ENCODE measurements at regions of chr20 and their contacts with region 1.

Region 1: GRCh38 chr20:62010551-62011402 is 54.9 kb downstream of the TAF4 start:
- DNase-seq: peak; percentile 20
- ATAC-seq: peak; percentile 83
- H3K4me3 ChIP-seq: no peak overlapping the region
- H3K27ac ChIP-seq: no peak overlapping the region
- H3K4me1 ChIP-seq: no peaks in the 10 kb centered on the region; the same call in 1 of the 2 replicates
- H3K27me3 ChIP-seq: no peaks in the 10 kb centered on the region
- CTCF ChIP-seq: no peak; the same call in 1 of the 2 replicates

Region 2: GRCh38 chr20:61925555-61926252 is 85.1 kb before region 1 on chr20:
- CTCF ChIA-PET with region 1: no interaction called
- POLR2A ChIA-PET with region 1: no interaction called
- in situ Hi-C with region 1: no loop called
- intact Hi-C with region 1: no loop called
- DNase-seq: no peak
- ATAC-seq: peak; percentile 40; the same call in 1 of the 2 replicates
- H3K4me3 ChIP-seq: no peak overlapping the region
- H3K27ac ChIP-seq: no peak overlapping the region
- H3K4me1 ChIP-seq: no peaks in the 10 kb centered on the region
- H3K27me3 ChIP-seq: no peaks in the 10 kb centered on the region
- CTCF ChIP-seq: no peak

Region 3: DNA sequence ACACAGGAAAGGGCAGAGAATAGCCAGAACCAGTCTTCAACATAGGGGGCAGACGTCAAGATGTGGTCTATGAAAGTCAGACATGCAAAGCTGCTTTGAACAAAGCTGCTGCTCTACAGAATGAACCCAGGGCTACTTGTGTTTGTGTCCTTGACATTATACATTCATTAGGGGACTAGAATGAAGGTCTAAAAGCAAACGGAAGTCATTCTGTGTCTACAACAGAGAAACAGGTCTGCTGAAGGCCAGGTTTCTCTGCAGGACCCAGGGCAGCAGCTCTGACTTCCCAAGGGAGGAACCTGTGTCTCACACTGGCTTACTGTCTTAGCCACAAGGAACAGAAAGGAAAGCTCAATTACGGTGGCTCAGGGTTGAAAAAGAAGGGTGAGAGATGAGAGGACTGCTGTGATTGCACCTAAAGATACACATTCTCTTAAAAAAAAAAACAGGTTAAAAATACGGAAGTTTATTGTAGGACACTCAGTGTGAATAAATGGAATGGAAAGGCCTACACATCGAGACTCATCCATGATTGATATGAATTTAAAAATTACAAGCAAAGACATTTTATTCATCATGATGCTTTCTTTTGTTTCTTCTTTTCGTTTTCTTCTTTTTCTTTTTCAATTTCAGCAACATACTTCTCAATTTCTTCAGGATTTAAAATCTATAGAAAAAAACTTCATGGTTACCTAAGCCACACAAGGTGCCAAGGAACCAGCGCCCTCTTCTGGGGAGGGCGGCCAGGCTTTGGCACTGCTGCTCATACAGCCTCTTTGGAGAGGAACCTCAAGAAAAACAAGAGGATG is 125.7 kb after region 1 on chr20:
- CTCF ChIA-PET with region 1: interaction called, 7 read pairs
- POLR2A ChIA-PET with region 1: no interaction called
- in situ Hi-C with region 1: no loop called
- intact Hi-C with region 1: loop called (anchors 2 kb)
- DNase-seq: no peak
- ATAC-seq: peak; percentile 74
- H3K4me3 ChIP-seq: no peak overlapping the region
- H3K27ac ChIP-seq: no peak overlapping the region
- H3K4me1 ChIP-seq: peaks cover 7% of the 10 kb centered on the region; the same call in 1 of the 2 replicates
- H3K27me3 ChIP-seq: no peaks in the 10 kb centered on the region
- CTCF ChIP-seq: peak; percentile 95